ENCODE measurements at regions of chr20 and their contacts with region 1.

Region 1: GRCh38 chr20:18632196-18633009 is 44.5 kb downstream of the DTD1 start:
- DNase-seq: peak; percentile 72
- ATAC-seq: peak; percentile 98
- H3K4me3 ChIP-seq: no peak overlapping the region
- H3K27ac ChIP-seq: no peak overlapping the region
- H3K4me1 ChIP-seq: no peaks in the 10 kb centered on the region
- H3K27me3 ChIP-seq: no peaks in the 10 kb centered on the region
- CTCF ChIP-seq: peak; percentile 97
- EP300 ChIP-seq: no peak
- POLR2A ChIP-seq: no peak
- RAD21 ChIP-seq: peak; percentile 92

Region 2: GRCh38 chr20:18363708-18364390 is 268.6 kb before region 1 on chr20:
- CTCF ChIA-PET with region 1: no interaction called
- POLR2A ChIA-PET with region 1: no interaction called
- in situ Hi-C with region 1: no loop called
- intact Hi-C with region 1: no loop called
- DNase-seq: no peak
- ATAC-seq: no peak
- H3K4me3 ChIP-seq: no peak overlapping the region
- H3K27ac ChIP-seq: no peak overlapping the region
- H3K4me1 ChIP-seq: no peaks in the 10 kb centered on the region
- H3K27me3 ChIP-seq: no peaks in the 10 kb centered on the region
- CTCF ChIP-seq: no peak
- EP300 ChIP-seq: no peak
- POLR2A ChIP-seq: no peak
- RAD21 ChIP-seq: no peak

Region 3: DNA sequence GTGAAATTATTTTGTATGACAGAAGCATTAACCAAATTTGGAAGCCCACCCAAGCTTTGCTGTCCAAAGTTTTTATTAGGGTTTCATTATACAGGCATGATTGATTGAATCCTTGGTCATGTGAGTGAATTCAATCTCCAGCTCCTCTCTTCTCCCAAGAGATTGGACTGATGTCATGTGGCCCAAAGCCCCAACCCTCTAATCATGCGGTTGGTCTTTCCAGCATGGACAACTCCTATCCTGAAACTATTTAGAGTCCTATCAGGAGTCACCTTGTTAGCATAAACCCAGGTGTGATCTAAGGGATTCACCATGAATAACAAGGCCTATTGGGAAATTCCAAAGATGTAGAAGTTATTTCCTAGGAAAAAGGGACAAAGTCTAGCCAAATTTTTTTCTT is 154.6 kb before region 1 on chr20:
- CTCF ChIA-PET with region 1: no interaction called
- POLR2A ChIA-PET with region 1: no interaction called
- in situ Hi-C with region 1: no loop called
- intact Hi-C with region 1: no loop called
- DNase-seq: no peak
- ATAC-seq: no peak
- H3K4me3 ChIP-seq: no peak overlapping the region
- H3K27ac ChIP-seq: no peak overlapping the region
- H3K4me1 ChIP-seq: peaks cover 21% of the 10 kb centered on the region
- H3K27me3 ChIP-seq: no peaks in the 10 kb centered on the region
- CTCF ChIP-seq: no peak
- EP300 ChIP-seq: no peak
- POLR2A ChIP-seq: no peak
- RAD21 ChIP-seq: no peak

Region 4: DNA sequence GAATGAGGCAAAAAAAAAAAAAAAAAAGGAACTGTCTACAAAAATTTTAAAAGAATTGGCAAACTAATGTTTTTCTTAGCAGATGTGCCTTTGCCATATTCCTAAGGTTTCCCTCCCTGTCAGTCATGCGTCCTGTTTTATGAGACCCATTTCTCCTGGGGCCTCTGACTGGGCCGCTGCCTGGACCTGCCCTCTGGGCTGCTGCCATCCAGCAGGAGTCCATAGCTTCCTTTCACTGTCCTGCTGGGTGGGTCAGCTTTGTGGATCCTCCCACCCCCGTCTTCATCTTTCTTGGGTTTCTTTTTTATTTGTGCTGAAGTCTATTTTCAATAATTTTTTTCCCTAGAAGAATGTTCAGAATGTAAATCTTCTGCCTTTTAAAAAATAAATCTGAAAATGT is 70.3 kb after region 1 on chr20:
- CTCF ChIA-PET with region 1: no interaction called
- POLR2A ChIA-PET with region 1: no interaction called
- in situ Hi-C with region 1: no loop called
- intact Hi-C with region 1: no loop called
- DNase-seq: no peak
- ATAC-seq: no peak
- H3K4me3 ChIP-seq: no peak overlapping the region
- H3K27ac ChIP-seq: no peak overlapping the region
- H3K4me1 ChIP-seq: no peaks in the 10 kb centered on the region
- H3K27me3 ChIP-seq: no peaks in the 10 kb centered on the region
- CTCF ChIP-seq: no peak
- EP300 ChIP-seq: no peak
- POLR2A ChIP-seq: no peak
- RAD21 ChIP-seq: no peak

Region 5: GRCh38 chr20:18793625-18794427 is 161.4 kb after region 1 on chr20:
- CTCF ChIA-PET with region 1: no interaction called
- POLR2A ChIA-PET with region 1: no interaction called
- in situ Hi-C with region 1: no loop called
- intact Hi-C with region 1: loop called (anchors 1 kb)
- DNase-seq: peak; percentile 97
- ATAC-seq: peak; percentile 99
- H3K4me3 ChIP-seq: peak overlapping the region; percentile 76 to 78 (median 76)
- H3K27ac ChIP-seq: peak overlapping the region; percentile 44
- H3K4me1 ChIP-seq: peaks cover 16% of the 10 kb centered on the region
- H3K27me3 ChIP-seq: no peaks in the 10 kb centered on the region; a peak in 1 of 5 replicates
- CTCF ChIP-seq: peak; percentile 73
- EP300 ChIP-seq: no peak
- POLR2A ChIP-seq: peak; percentile 89 to 95
- RAD21 ChIP-seq: peak; percentile 77

Region 6: GRCh38 chr20:18902076-18902671 is 269.8 kb after region 1 on chr20:
- CTCF ChIA-PET with region 1: no interaction called
- POLR2A ChIA-PET with region 1: no interaction called
- in situ Hi-C with region 1: no loop called
- intact Hi-C with region 1: loop called (anchors 2 kb)
- DNase-seq: no peak
- ATAC-seq: no peak
- H3K4me3 ChIP-seq: no peak overlapping the region
- H3K27ac ChIP-seq: no peak overlapping the region
- H3K4me1 ChIP-seq: no peaks in the 10 kb centered on the region
- H3K27me3 ChIP-seq: no peaks in the 10 kb centered on the region
- CTCF ChIP-seq: no peak
- EP300 ChIP-seq: no peak
- POLR2A ChIP-seq: no peak
- RAD21 ChIP-seq: no peak

Region 7: GRCh38 chr20:19205977-19206396 is 573.6 kb after region 1 on chr20:
- CTCF ChIA-PET with region 1: no interaction called
- POLR2A ChIA-PET with region 1: no interaction called
- in situ Hi-C with region 1: loop called (anchors 25 kb)
- intact Hi-C with region 1: loop called (anchors 5 kb)
- DNase-seq: peak; percentile 50
- ATAC-seq: peak; percentile 96
- H3K4me3 ChIP-seq: no peak overlapping the region
- H3K27ac ChIP-seq: no peak overlapping the region
- H3K4me1 ChIP-seq: no peaks in the 10 kb centered on the region
- H3K27me3 ChIP-seq: peaks cover under 1 to 20% of the 10 kb centered on the region in 2 experiments; a peak in 4 of 5 replicates
- CTCF ChIP-seq: peak; percentile 95
- EP300 ChIP-seq: no peak
- POLR2A ChIP-seq: no peak
- RAD21 ChIP-seq: peak; percentile 47

Region 8: GRCh38 chr20:19583532-19584175 is 951.3 kb after region 1 on chr20:
- CTCF ChIA-PET with region 1: interaction called, 3 read pairs
- POLR2A ChIA-PET with region 1: no interaction called
- in situ Hi-C with region 1: loop called (anchors 25 kb)
- intact Hi-C with region 1: loop called (anchors 1 kb)
- DNase-seq: peak; percentile 51
- ATAC-seq: peak; percentile 89
- H3K4me3 ChIP-seq: no peak overlapping the region
- H3K27ac ChIP-seq: no peak overlapping the region
- H3K4me1 ChIP-seq: no peaks in the 10 kb centered on the region
- H3K27me3 ChIP-seq: peaks cover 4 to 53% of the 10 kb centered on the region in 2 experiments; a peak in 4 of 5 replicates
- CTCF ChIP-seq: peak; percentile 90
- EP300 ChIP-seq: no peak
- POLR2A ChIP-seq: no peak
- RAD21 ChIP-seq: peak; percentile 76